ENCODE measurements at regions of chr10 and their contacts with region 1.

Region 1: DNA sequence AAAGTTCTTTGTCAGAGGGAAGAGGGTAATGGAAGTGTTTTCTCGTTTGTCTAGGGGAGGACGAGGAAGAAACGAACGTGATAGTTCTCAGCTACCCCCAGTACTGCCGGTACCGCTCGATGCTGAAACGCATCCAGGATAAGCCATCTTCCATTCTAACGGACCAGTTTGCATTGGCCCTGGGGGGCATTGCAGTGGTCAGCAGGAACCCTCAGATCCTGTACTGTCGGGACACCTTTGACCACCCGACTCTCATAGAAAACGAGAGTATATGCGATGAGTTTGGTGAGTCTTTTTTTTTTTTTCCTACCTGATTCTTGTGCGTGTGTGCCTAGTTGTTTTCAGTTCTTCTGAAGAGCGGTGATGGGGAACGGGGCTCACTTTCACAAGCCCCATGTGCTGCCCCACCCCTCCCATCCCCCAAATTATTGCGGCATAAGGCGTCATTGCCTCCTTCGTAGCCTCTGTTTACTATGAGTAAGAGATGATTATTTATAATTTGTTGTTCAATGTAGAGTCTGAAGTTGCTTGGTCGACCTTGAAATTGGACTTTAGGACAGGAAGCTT is 98.6 kb downstream of the ARID5B start:
- DNase-seq: peak; percentile 96
- ATAC-seq: peak; percentile 84
- H3K4me3 ChIP-seq: peak overlapping the region in 4 of 5 experiments; percentile 32 to 57 (median 44)
- H3K4me3 Mint-ChIP-seq: peak overlapping the region; percentile 85
- H3K27ac ChIP-seq: peak overlapping the region; percentile 96 to 98
- H3K27ac Mint-ChIP-seq: peak overlapping the region; percentile 100
- H3K4me1 ChIP-seq: peaks cover 74 to 90% of the 10 kb centered on the region in 2 donors
- H3K4me1 Mint-ChIP-seq: peaks cover 94% of the 10 kb centered on the region
- H3K27me3 ChIP-seq: no peaks in the 10 kb centered on the region
- H3K27me3 Mint-ChIP-seq: no peaks in the 10 kb centered on the region
- CTCF ChIP-seq: no peak

Region 2: DNA sequence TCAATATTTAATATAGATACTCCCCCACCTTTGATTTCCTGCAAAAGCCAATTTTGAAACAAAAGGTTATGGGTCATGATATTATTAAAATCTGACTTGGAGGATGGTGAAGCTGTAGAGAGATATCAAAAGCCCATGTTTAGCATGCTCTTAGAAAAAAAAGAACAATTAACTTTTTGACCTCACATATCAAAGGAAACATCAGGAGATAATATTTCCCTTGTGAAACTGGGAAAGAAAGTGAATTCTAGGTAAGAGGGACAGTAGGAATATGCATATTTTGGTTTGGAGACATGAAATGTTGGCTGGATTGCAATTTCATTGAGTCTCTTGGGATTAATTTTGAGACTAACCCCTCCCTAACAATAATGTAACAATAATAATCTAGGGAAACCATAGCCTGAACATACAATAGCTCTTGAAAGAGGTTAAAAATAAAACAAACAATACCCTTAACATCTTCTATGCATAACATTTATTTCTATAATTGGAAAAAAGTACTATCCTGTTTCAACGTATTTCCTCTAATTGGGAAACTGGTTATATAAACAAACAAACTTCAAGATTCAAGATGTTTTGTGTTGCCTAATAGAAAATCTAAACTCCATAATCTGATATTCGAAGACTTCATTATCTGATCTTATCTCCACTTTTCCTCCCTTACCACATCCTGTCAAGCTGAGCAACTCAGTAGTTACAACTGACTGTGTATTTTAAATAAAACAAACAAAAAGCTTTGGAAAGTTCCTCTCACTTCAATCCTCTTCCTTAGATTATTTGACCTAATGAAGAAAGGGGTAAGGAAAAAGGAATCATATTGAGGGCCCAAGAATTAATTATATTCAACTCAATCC is 561.8 kb before region 1 on chr10:
- CTCF ChIA-PET with region 1: no interaction called
- POLR2A ChIA-PET with region 1: no interaction called
- intact Hi-C with region 1: no loop called
- DNase-seq: no peak
- ATAC-seq: no peak
- H3K4me3 ChIP-seq: no peak overlapping the region
- H3K4me3 Mint-ChIP-seq: no peak overlapping the region
- H3K27ac ChIP-seq: no peak overlapping the region
- H3K27ac Mint-ChIP-seq: no peak overlapping the region
- H3K4me1 ChIP-seq: no peaks in the 10 kb centered on the region
- H3K4me1 Mint-ChIP-seq: no peaks in the 10 kb centered on the region
- H3K27me3 ChIP-seq: no peaks in the 10 kb centered on the region
- H3K27me3 Mint-ChIP-seq: peaks cover 5% of the 10 kb centered on the region
- CTCF ChIP-seq: no peak

Region 3: DNA sequence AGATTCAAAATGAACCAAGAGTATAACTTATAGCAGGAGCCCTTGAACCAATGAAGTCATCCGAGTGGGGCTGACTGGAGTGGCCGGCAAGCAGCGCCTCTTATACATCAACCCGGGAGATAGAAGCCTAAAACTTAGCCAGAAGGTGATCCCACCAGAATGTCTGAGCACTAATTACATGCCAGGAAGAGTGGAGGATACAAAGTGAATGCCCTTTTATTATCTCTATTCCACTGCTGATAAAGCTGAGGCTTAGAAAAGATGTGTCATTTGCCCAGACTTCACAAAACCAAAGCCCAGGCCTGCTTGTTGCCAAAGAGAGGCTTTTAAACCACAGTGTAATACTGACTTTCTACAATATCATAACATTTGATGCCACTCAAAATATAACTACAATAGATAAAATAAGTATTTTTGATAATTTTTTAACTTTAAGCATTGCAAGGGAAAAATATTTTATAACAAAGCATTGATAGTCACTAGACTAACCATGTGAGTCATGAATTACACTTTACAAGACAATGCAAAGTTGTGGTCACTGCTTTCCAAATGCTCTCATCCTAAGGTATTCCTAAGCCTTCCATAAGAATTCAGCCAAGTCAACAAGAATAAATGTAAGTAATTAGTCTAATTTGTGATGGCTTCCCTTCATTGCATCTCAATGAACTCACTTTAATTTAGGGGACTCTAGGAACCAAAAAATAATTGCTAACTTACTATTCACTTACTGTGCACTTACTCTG is 157.2 kb before region 1 on chr10:
- CTCF ChIA-PET with region 1: no interaction called
- POLR2A ChIA-PET with region 1: no interaction called
- intact Hi-C with region 1: no loop called
- DNase-seq: no peak
- ATAC-seq: no peak
- H3K4me3 ChIP-seq: no peak overlapping the region
- H3K4me3 Mint-ChIP-seq: no peak overlapping the region
- H3K27ac ChIP-seq: no peak overlapping the region
- H3K27ac Mint-ChIP-seq: no peak overlapping the region
- H3K4me1 ChIP-seq: peaks cover 0 to 6% of the 10 kb centered on the region in 2 donors
- H3K4me1 Mint-ChIP-seq: peaks cover 7% of the 10 kb centered on the region
- H3K27me3 ChIP-seq: no peaks in the 10 kb centered on the region
- H3K27me3 Mint-ChIP-seq: no peaks in the 10 kb centered on the region
- CTCF ChIP-seq: no peak

Region 4: DNA sequence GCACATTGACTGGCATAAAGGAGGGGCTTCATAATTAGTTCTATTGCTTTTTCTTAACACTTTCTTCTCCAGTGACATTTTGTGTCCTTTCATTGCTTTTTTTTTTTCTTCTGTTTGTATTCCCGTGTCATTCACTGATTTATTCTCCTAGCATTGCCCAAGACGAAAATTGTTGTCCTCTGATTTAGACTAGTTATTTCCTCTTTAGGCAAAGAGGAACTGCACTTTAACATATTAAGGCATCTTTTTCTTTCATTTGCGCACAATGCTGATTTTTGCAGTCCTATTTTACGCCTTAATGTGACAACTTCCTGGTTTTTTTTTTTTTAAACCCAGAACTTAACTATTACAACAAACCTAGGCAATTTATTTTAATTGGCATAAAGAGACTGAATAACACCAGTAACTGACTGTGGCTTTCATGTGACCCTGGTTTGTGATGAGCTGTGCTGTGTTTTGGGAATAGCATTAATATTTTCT is 58.9 kb before region 1 on chr10:
- CTCF ChIA-PET with region 1: no interaction called
- POLR2A ChIA-PET with region 1: interaction called, 7 read pairs
- intact Hi-C with region 1: loop called (anchors 1 kb)
- DNase-seq: peak; percentile 86
- ATAC-seq: peak; percentile 64
- H3K4me3 ChIP-seq: peak overlapping the region in 2 of 5 experiments; percentile 10 to 30
- H3K4me3 Mint-ChIP-seq: peak overlapping the region; percentile 63
- H3K27ac ChIP-seq: peak overlapping the region; percentile 86 to 91
- H3K27ac Mint-ChIP-seq: peak overlapping the region; percentile 83
- H3K4me1 ChIP-seq: peaks cover 80 to 84% of the 10 kb centered on the region in 2 donors
- H3K4me1 Mint-ChIP-seq: peaks cover 77% of the 10 kb centered on the region
- H3K27me3 ChIP-seq: no peaks in the 10 kb centered on the region
- H3K27me3 Mint-ChIP-seq: no peaks in the 10 kb centered on the region
- CTCF ChIP-seq: no peak

Region 5: GRCh38 chr10:61961278-61961677 is 38.8 kb before region 1 on chr10:
- CTCF ChIA-PET with region 1: no interaction called
- POLR2A ChIA-PET with region 1: no interaction called
- intact Hi-C with region 1: loop called (anchors 5 kb)
- DNase-seq: peak; percentile 63
- ATAC-seq: peak; percentile 51
- H3K4me3 ChIP-seq: peak overlapping the region in 1 of 5 experiments; percentile 3
- H3K4me3 Mint-ChIP-seq: peak overlapping the region; percentile 42
- H3K27ac ChIP-seq: peak overlapping the region; percentile 68 to 69
- H3K27ac Mint-ChIP-seq: peak overlapping the region; percentile 82
- H3K4me1 ChIP-seq: peaks cover 79 to 86% of the 10 kb centered on the region in 2 donors
- H3K4me1 Mint-ChIP-seq: peaks cover 85% of the 10 kb centered on the region
- H3K27me3 ChIP-seq: no peaks in the 10 kb centered on the region
- H3K27me3 Mint-ChIP-seq: no peaks in the 10 kb centered on the region
- CTCF ChIP-seq: no peak

Region 6: DNA sequence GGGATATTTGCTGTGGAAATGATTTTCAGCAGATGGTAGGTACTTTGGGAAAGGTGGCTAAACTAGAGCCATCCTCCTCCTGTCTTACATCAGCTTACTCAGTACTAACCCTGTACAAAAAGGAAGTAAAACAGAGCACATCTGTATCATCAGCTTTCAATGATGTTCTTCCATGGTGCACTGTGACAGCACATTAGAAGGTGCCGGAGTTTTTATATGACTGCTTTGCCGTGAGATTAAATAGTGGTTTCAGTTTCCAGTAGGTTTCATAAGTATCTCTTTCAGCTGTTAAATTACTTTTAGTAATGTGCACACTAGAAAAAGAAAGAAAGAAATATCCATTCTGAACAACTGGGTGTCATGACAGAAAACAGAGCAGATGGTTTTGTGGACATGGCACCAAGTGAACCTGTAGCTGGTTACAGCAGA is 12.2 kb before region 1 on chr10:
- CTCF ChIA-PET with region 1: interaction called, 7 read pairs
- POLR2A ChIA-PET with region 1: interaction called, 14 read pairs
- intact Hi-C with region 1: loop called (anchors 1 kb)
- DNase-seq: peak; percentile 88
- ATAC-seq: peak; percentile 82
- H3K4me3 ChIP-seq: peak overlapping the region in 1 of 5 experiments; percentile 29
- H3K4me3 Mint-ChIP-seq: peak overlapping the region; percentile 88
- H3K27ac ChIP-seq: peak overlapping the region; percentile 84 to 88
- H3K27ac Mint-ChIP-seq: peak overlapping the region; percentile 99
- H3K4me1 ChIP-seq: peaks cover 47 to 61% of the 10 kb centered on the region in 2 donors
- H3K4me1 Mint-ChIP-seq: peaks cover 82% of the 10 kb centered on the region
- H3K27me3 ChIP-seq: no peaks in the 10 kb centered on the region
- H3K27me3 Mint-ChIP-seq: no peaks in the 10 kb centered on the region
- CTCF ChIP-seq: no peak

Region 7: GRCh38 chr10:62016623-62017490 is 16.7 kb after region 1 on chr10:
- CTCF ChIA-PET with region 1: interaction called, 9 read pairs
- POLR2A ChIA-PET with region 1: interaction called, 9 read pairs
- intact Hi-C with region 1: loop called (anchors 1 kb)
- DNase-seq: peak; percentile 88
- ATAC-seq: peak; percentile 71
- H3K4me3 ChIP-seq: peak overlapping the region in 3 of 5 experiments; percentile 10 to 50 (median 11)
- H3K4me3 Mint-ChIP-seq: peak overlapping the region; percentile 76
- H3K27ac ChIP-seq: peak overlapping the region; percentile 94 to 98
- H3K27ac Mint-ChIP-seq: peak overlapping the region; percentile 93
- H3K4me1 ChIP-seq: peaks cover 75 to 76% of the 10 kb centered on the region in 2 donors
- H3K4me1 Mint-ChIP-seq: peaks cover 80% of the 10 kb centered on the region
- H3K27me3 ChIP-seq: no peaks in the 10 kb centered on the region
- H3K27me3 Mint-ChIP-seq: no peaks in the 10 kb centered on the region
- CTCF ChIP-seq: no peak

Measured in B cell (primary cell).